Body of pancreas (tissue), 4 donors: ENCODE measurements at regions of chr18 and their contacts with region 1.

Region 1: GRCh38 chr18:58321986-58322385 is 278.0 kb downstream of the NEDD4L start:
- DNase-seq: peak; percentile 61 to 89 (median 82)
- ATAC-seq: peak; percentile 94
- H3K4me3 ChIP-seq: no peak overlapping the region
- H3K27ac ChIP-seq: peak overlapping the region in 3 of 4 donors; percentile 32 to 64 (median 57)
- H3K4me1 ChIP-seq: peaks cover 26% of the 10 kb centered on the region
- H3K27me3 ChIP-seq: no peaks in the 10 kb centered on the region
- CTCF ChIP-seq: peak; percentile 19 to 87 (median 59)
- POLR2A ChIP-seq: peak in 2 of 3 donors; percentile 18 to 38

Region 2: GRCh38 chr18:58038063-58038462 is 283.9 kb before region 1 on chr18:
- intact Hi-C with region 1: loop called (anchors 10 kb)
- DNase-seq: no peak
- ATAC-seq: no peak
- H3K4me3 ChIP-seq: no peak overlapping the region
- H3K27ac ChIP-seq: no peak overlapping the region
- H3K4me1 ChIP-seq: no peaks in the 10 kb centered on the region
- H3K27me3 ChIP-seq: no peaks in the 10 kb centered on the region
- CTCF ChIP-seq: no peak
- POLR2A ChIP-seq: no peak

Region 3: DNA sequence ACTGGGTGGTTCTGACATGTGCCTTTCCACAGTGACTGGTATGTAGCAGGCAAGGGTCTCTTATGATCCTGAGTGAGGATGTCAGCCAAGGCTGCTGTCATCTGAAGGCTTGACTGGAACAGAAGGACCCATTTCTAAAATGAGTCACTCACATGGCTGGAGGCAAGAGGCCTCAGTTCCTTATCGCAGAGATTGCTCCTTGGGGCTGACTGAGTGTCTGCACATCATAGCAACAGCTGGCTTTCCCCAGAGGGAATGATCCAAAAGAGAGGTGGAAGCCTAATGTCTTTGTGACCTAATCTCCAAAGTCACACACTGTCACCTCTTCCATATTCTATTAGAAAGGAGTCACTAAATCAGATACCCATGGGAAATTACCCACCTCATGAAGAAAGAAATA is 164.0 kb before region 1 on chr18:
- intact Hi-C with region 1: loop called (anchors 10 kb)
- DNase-seq: no peak
- ATAC-seq: no peak
- H3K4me3 ChIP-seq: no peak overlapping the region
- H3K27ac ChIP-seq: no peak overlapping the region
- H3K4me1 ChIP-seq: peaks cover 21% of the 10 kb centered on the region
- H3K27me3 ChIP-seq: no peaks in the 10 kb centered on the region
- CTCF ChIP-seq: no peak
- POLR2A ChIP-seq: no peak

Region 4: DNA sequence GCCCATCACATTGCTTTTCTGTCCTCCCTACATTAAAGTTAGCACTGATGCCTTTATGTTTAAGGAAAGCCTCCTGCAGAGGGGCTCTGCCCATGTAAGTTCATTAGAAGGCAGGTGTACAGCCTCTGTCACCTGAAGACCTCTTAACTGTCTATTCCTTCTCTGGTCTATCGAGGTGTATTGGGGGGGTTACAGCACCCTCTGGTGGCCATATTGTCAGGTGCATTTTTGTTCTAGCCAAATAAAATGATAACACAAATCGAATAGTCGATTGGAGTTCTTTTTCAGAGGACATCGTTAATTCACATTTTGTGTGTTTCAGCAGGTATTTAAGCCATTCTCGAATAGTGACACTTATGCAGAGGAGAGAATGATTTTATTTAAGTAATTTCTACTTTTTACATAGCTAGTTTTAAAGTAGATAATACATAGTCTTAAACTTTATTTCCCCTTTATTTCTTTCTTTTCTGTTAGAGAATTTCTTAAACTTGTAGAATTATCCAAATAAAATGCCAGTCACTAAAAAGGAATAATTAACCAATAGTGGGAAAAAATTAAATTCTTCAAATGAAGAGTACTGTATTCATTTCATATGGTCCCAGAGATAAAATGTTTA is 141.1 kb before region 1 on chr18:
- intact Hi-C with region 1: loop called (anchors 10 kb)
- DNase-seq: peak; percentile 57 to 74 (median 68)
- ATAC-seq: peak; percentile 47
- H3K4me3 ChIP-seq: no peak overlapping the region
- H3K27ac ChIP-seq: no peak overlapping the region
- H3K4me1 ChIP-seq: peaks cover 56% of the 10 kb centered on the region
- H3K27me3 ChIP-seq: no peaks in the 10 kb centered on the region
- CTCF ChIP-seq: peak; percentile 69 to 96 (median 83)
- POLR2A ChIP-seq: no peak